ENCODE measurements at regions of chr16 and their contacts with region 1.

Region 1: GRCh38 chr16:72093448-72094265 is at the starts of genes DHX38 and TXNL4B:
- DNase-seq: peak; percentile 79 to 98 (median 86)
- ATAC-seq: peak; percentile 97
- H3K4me3 ChIP-seq: peak within 1 kb of the TSS; percentile 88
- H3K4me3 Mint-ChIP-seq: peak within 1 kb of the TSS; percentile 95
- H3K27ac ChIP-seq: peak within 1 kb of the TSS; percentile 91
- H3K27ac Mint-ChIP-seq: peak within 1 kb of the TSS; percentile 94
- H3K4me1 ChIP-seq: peaks cover 27% of the 10 kb centered on the region
- H3K4me1 Mint-ChIP-seq: peaks cover 71% of the 10 kb centered on the region
- H3K27me3 ChIP-seq: no peaks in the 10 kb centered on the region
- H3K27me3 Mint-ChIP-seq: no peaks in the 10 kb centered on the region
- CTCF ChIP-seq: no peak
- total RNA-seq, gene DHX38: 103 to 109 TPM
- total RNA-seq, gene TXNL4B: 11.5 to 15.0 TPM

Region 2: GRCh38 chr16:71461686-71462648 is 631.7 kb before region 1 on chr16 and contains the start of gene ZNF23:
- CTCF ChIA-PET with region 1: no interaction called
- POLR2A ChIA-PET with region 1: no interaction called
- intact Hi-C with region 1: loop called in 1 of 2 experiments (anchors 5 kb)
- DNase-seq: peak; percentile 53 to 87 (median 72)
- ATAC-seq: peak; percentile 95
- H3K4me3 ChIP-seq: peak within 1 kb of the TSS; percentile 96
- H3K4me3 Mint-ChIP-seq: peak within 1 kb of the TSS; percentile 94
- H3K27ac ChIP-seq: peak within 1 kb of the TSS; percentile 68 to 79
- H3K27ac Mint-ChIP-seq: peak within 1 kb of the TSS; percentile 85
- H3K4me1 ChIP-seq: peaks cover 11% of the 10 kb centered on the region
- H3K4me1 Mint-ChIP-seq: peaks cover 34% of the 10 kb centered on the region
- H3K27me3 ChIP-seq: no peaks in the 10 kb centered on the region
- H3K27me3 Mint-ChIP-seq: no peaks in the 10 kb centered on the region
- CTCF ChIP-seq: peak; percentile 54
- total RNA-seq, gene ZNF23: 7.0 to 8.4 TPM

Region 3: GRCh38 chr16:71484006-71484893 is 609.4 kb before region 1 on chr16:
- CTCF ChIA-PET with region 1: no interaction called
- POLR2A ChIA-PET with region 1: no interaction called
- intact Hi-C with region 1: loop called in 1 of 2 experiments (anchors 2 kb)
- DNase-seq: peak; percentile 64 to 95 (median 76)
- ATAC-seq: peak; percentile 84
- H3K4me3 ChIP-seq: peak overlapping the region; percentile 94
- H3K4me3 Mint-ChIP-seq: peak overlapping the region; percentile 85
- H3K27ac ChIP-seq: peak overlapping the region; percentile 93 to 99
- H3K27ac Mint-ChIP-seq: peak overlapping the region; percentile 89
- H3K4me1 ChIP-seq: peaks cover 14% of the 10 kb centered on the region
- H3K4me1 Mint-ChIP-seq: peaks cover 15% of the 10 kb centered on the region
- H3K27me3 ChIP-seq: no peaks in the 10 kb centered on the region
- H3K27me3 Mint-ChIP-seq: no peaks in the 10 kb centered on the region
- CTCF ChIP-seq: no peak

Region 4: DNA sequence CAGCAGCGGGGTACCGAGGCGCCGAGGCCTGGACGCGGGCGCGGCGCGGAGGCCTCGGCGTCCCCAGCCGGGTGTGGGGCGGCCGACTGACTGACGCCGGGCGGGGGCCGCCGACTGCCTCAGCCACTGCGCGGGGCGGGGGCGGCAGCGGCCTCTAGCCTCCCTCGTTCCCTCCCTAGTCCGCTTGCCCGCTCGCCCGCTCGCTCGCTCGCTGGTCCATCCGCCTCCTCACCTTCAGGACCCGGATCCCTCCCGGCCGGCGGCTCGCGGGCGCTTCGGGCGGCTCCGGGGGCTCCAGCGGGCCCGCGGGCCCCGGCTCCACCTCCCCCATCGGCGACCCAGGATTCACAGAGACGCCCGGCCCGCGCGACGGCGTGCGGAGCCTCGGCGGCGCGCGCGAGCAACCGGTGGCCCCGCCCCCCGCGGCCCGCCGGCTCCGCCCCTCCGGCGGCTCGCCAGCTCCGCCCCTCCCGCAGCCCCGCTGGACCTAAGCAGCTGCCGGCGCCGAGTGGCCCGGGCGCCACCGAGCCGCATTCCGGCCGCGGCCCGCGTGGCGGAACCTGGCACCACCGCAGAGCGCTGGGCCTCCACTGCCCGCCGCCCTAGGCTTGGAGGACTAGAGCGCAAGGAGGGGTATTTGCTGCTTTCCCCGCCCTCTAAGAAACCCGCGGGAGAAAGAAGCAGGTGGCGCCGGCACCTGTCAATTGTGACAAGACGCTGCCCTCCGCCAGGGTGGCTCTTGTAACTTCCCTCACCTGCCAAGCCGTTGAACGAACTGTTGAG is 369.9 kb before region 1 on chr16:
- CTCF ChIA-PET with region 1: no interaction called
- POLR2A ChIA-PET with region 1: no interaction called
- intact Hi-C with region 1: loop called in 1 of 2 experiments (anchors 10 kb)
- DNase-seq: peak; percentile 59 to 93 (median 78)
- ATAC-seq: peak; percentile 81
- H3K4me3 ChIP-seq: peak overlapping the region; percentile 84
- H3K4me3 Mint-ChIP-seq: peak overlapping the region; percentile 92
- H3K27ac ChIP-seq: no peak overlapping the region
- H3K27ac Mint-ChIP-seq: peak overlapping the region; percentile 74
- H3K4me1 ChIP-seq: peaks cover 11% of the 10 kb centered on the region
- H3K4me1 Mint-ChIP-seq: peaks cover 18% of the 10 kb centered on the region
- H3K27me3 ChIP-seq: no peaks in the 10 kb centered on the region
- H3K27me3 Mint-ChIP-seq: no peaks in the 10 kb centered on the region
- CTCF ChIP-seq: no peak

Region 5: GRCh38 chr16:72008424-72009216 is 85.0 kb before region 1 on chr16 and contains the start of gene DHODH:
- CTCF ChIA-PET with region 1: no interaction called
- POLR2A ChIA-PET with region 1: no interaction called
- intact Hi-C with region 1: loop called in 1 of 2 experiments (anchors 1 kb)
- DNase-seq: peak; percentile 94 to 99 (median 97)
- ATAC-seq: peak; percentile 99
- H3K4me3 ChIP-seq: peak within 1 kb of the TSS; percentile 99
- H3K4me3 Mint-ChIP-seq: peak within 1 kb of the TSS; percentile 96
- H3K27ac ChIP-seq: peak within 1 kb of the TSS; percentile 29 to 58
- H3K27ac Mint-ChIP-seq: peak within 1 kb of the TSS; percentile 73
- H3K4me1 ChIP-seq: peaks cover 19% of the 10 kb centered on the region
- H3K4me1 Mint-ChIP-seq: peaks cover 12% of the 10 kb centered on the region
- H3K27me3 ChIP-seq: no peaks in the 10 kb centered on the region
- H3K27me3 Mint-ChIP-seq: no peaks in the 10 kb centered on the region
- CTCF ChIP-seq: no peak
- total RNA-seq, gene DHODH: 2.5 to 2.7 TPM

Region 6: DNA sequence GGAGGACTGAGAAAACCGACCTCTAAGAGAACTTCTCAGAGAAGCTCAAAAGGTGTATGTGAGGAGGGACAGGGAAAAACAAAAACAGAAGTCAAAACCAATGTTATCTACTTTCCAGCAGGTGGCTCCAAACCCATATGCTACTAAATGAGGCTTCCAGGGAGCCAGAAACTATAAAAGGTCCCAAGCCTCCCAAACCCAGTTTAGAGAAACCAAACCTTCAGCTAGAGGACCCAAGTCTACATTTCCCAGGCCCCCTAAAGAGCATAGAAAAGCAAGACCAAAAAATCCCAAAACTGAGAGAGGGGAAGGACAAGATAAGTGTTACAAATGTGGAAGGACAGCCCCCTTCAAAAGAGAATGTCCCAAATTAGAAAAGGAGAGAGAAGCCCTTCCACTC is 26.9 kb before region 1 on chr16:
- CTCF ChIA-PET with region 1: no interaction called
- POLR2A ChIA-PET with region 1: no interaction called
- intact Hi-C with region 1: no loop called
- DNase-seq: peak in 3 of 14 experiments; percentile 25 to 52 (median 41)
- ATAC-seq: no peak
- H3K4me3 ChIP-seq: no peak overlapping the region
- H3K4me3 Mint-ChIP-seq: no peak overlapping the region
- H3K27ac ChIP-seq: no peak overlapping the region
- H3K27ac Mint-ChIP-seq: no peak overlapping the region
- H3K4me1 ChIP-seq: no peaks in the 10 kb centered on the region
- H3K4me1 Mint-ChIP-seq: no peaks in the 10 kb centered on the region
- H3K27me3 ChIP-seq: no peaks in the 10 kb centered on the region
- H3K27me3 Mint-ChIP-seq: no peaks in the 10 kb centered on the region
- CTCF ChIP-seq: peak; percentile 65

Region 7: DNA sequence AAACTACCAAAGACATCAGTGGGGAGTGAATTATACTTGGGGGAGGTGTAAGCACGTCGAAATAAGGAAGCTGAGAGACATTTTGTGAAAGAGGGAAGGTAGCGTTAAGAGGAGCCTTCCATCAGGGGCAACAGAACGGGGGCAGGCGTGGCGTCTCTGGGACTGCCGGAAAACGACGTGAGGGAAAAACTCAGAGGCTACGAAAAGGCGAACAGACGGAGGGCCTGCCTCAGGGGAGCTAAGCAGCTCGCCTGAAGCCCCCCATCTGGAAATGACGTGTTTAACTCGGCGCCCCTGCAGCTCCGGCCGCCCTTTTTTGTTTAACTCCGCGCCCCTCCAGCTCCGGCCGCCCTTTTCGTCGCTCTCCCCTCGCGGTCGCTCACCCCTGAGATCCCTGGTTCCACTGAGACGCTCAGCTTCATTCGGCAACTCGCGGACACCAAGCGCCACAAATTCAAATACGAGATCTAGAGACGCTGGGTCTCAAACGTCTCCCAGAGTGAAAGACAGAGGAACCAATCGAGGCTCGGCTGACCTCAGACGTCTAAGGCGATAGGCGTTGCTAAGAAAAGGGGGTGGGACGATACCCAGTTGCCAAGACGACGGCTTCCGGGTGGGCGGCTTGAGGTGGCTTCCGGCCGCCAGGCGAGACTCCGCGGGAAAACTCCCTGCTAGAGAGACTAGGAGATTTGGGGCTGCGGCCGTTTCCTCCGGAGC is 571.0 kb after region 1 on chr16:
- CTCF ChIA-PET with region 1: no interaction called
- POLR2A ChIA-PET with region 1: interaction called, 6 read pairs
- intact Hi-C with region 1: loop called in 1 of 2 experiments (anchors 10 kb)
- DNase-seq: peak; percentile 84 to 98 (median 90)
- ATAC-seq: peak; percentile 99
- H3K4me3 ChIP-seq: peak overlapping the region; percentile 77
- H3K4me3 Mint-ChIP-seq: peak overlapping the region; percentile 98
- H3K27ac ChIP-seq: peak overlapping the region; percentile 54 to 59
- H3K27ac Mint-ChIP-seq: peak overlapping the region; percentile 85
- H3K4me1 ChIP-seq: peaks cover 9% of the 10 kb centered on the region
- H3K4me1 Mint-ChIP-seq: peaks cover 15% of the 10 kb centered on the region
- H3K27me3 ChIP-seq: no peaks in the 10 kb centered on the region
- H3K27me3 Mint-ChIP-seq: no peaks in the 10 kb centered on the region
- CTCF ChIP-seq: no peak